Vagina (tissue), 2 donors: ENCODE measurements at regions of chr6 and their contacts with region 1.

Region 1: GRCh38 chr6:155154158-155154830 is 109.5 kb upstream of the CLDN20 start:
- DNase-seq: no peak
- H3K4me3 ChIP-seq: no peak overlapping the region
- H3K27ac ChIP-seq: no peak overlapping the region
- H3K4me1 ChIP-seq: peaks cover 7% of the 10 kb centered on the region
- H3K27me3 ChIP-seq: no peaks in the 10 kb centered on the region
- CTCF ChIP-seq: no peak
- POLR2A ChIP-seq: no peak

Region 2: DNA sequence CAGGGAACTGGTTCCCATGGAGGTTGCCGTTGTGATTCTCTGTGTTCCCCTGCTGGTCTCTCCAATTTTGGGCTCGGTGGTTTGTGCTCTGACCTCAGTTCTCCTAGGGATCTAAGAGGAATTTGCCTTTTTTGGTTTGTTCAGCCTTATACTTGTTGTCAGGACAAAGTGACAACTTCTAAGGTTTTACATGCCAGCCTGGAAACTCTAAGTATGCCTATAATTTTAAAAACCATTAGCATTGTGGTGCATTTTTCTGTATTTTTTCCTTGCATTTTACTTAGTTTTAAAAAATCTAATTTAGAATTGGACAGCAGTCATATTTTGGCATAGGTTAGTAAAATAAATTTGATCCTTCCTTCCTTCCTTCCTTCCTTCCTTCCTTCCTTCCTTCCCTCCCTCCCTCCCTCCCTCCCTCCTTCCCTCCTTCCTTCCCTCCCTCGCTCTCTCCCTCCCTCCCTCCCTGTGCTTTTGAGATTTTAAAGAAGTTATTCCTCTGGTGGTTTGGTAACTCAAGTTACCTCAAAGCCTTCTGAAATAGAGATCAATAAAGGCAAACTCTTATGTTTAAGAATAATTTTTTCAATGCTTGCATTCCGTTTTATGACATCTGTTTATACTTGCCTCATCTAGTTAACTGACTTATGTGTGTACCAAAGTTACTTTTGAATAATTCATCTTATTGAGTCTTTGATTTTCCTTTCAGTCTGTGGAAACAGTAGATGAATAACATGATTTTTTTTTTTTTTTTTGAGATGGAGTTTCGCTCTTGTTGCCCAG is 1881.9 kb before region 1 on chr6:
- intact Hi-C with region 1: loop called (anchors 5 kb)
- DNase-seq: no peak
- H3K4me3 ChIP-seq: no peak overlapping the region
- H3K27ac ChIP-seq: no peak overlapping the region
- H3K4me1 ChIP-seq: no peaks in the 10 kb centered on the region
- H3K27me3 ChIP-seq: no peaks in the 10 kb centered on the region
- CTCF ChIP-seq: no peak
- POLR2A ChIP-seq: no peak